Activated naive CD4-positive, alpha-beta T cell treated with anti-CD3 and anti-CD28 coated beads for 36 hours (primary cell): ENCODE measurements at regions of chr6 and their contacts with region 1.

Region 1: GRCh38 chr6:33147807-33148666 is 44.2 kb downstream of the COL11A2 start:
- DNase-seq: no peak
- H3K4me3 Mint-ChIP-seq: no peak overlapping the region
- H3K27ac Mint-ChIP-seq: no peak overlapping the region
- H3K4me1 Mint-ChIP-seq: no peaks in the 10 kb centered on the region
- H3K27me3 Mint-ChIP-seq: peaks cover 9% of the 10 kb centered on the region

Region 2: DNA sequence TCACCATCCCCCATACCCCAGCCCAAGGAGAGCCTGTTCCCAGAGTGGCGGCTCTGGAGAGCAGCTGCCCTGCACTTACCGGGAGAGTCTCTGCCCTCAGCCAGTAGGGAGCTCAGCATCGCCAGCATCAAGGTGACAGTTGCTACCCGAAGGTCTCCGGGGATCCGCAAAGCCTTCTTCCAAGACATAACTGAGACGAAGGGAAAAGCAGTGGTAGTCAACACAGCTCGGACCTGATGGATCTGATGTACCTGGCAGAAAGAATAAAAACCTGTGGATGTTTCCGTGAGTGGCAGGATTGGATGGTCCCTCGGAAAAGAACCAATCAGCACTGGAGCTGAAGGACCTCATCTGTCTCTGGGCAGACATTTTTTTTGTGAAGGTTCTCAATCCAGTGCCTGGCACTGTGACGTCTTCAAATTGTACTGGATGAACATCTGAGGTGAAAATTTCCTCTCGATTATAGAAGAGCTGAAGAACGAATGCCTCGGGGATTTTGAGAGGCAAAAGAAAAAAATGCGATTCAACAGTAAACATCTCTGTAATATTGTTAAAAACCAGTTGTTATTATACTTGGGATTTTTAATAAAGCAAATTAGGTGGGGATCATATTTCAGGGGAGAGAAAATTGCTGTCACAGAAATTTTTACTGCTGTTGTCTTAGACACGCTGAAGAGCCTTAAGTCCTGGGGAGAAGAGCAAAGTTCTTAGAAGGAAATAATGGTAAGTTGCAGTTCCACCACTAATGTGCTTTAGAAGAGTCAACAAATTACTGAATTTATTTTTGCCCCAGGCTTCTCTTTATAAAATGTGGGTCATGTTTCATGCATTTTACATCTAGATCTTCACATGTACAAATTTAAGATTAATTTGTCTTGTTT is 481.4 kb before region 1 on chr6 and contains the start of gene HLA-DQB1:
- CTCF ChIA-PET with region 1: no interaction called
- intact Hi-C with region 1: no loop called
- DNase-seq: peak; percentile 80
- H3K4me3 Mint-ChIP-seq: peak within 1 kb of the TSS; percentile 70
- H3K27ac Mint-ChIP-seq: no peak within 1 kb of the TSS
- H3K4me1 Mint-ChIP-seq: peaks cover 40% of the 10 kb centered on the region
- H3K27me3 Mint-ChIP-seq: peaks cover 32% of the 10 kb centered on the region
- total RNA-seq, gene HLA-DQB1: 6.2 to 7.4 TPM

Region 3: DNA sequence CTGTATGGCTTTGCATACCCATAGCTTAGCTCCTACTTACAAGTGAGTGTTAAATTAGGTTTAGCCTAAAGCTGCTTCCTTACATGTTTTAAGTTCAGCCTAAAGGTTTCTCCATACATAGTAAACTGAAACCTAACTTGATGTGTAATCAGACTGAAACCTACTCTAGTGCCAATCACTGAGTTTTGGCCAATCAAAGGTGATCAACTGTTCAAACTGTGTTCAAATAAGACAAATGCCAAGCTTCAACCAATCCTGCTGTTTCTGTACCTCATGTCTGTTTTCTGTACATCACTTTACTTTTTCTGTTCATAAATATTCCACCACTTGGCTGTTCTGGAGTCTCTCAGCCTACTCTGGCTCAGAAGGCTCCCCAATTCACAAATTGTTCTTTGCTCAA is 158.6 kb before region 1 on chr6:
- CTCF ChIA-PET with region 1: no interaction called
- intact Hi-C with region 1: no loop called
- DNase-seq: no peak
- H3K4me3 Mint-ChIP-seq: no peak overlapping the region
- H3K27ac Mint-ChIP-seq: no peak overlapping the region
- H3K4me1 Mint-ChIP-seq: peaks cover 5% of the 10 kb centered on the region
- H3K27me3 Mint-ChIP-seq: peaks cover 2% of the 10 kb centered on the region

Region 4: GRCh38 chr6:33014841-33015634 is 133.0 kb before region 1 on chr6:
- CTCF ChIA-PET with region 1: interaction called, 7 read pairs
- intact Hi-C with region 1: loop called (anchors 5 kb)
- DNase-seq: peak; percentile 64
- H3K4me3 Mint-ChIP-seq: no peak overlapping the region
- H3K27ac Mint-ChIP-seq: no peak overlapping the region
- H3K4me1 Mint-ChIP-seq: peaks cover 12% of the 10 kb centered on the region
- H3K27me3 Mint-ChIP-seq: no peaks in the 10 kb centered on the region

Region 5: GRCh38 chr6:33103776-33104175 is 44.3 kb before region 1 on chr6:
- CTCF ChIA-PET with region 1: no interaction called
- intact Hi-C with region 1: no loop called
- DNase-seq: no peak
- H3K4me3 Mint-ChIP-seq: no peak overlapping the region
- H3K27ac Mint-ChIP-seq: no peak overlapping the region
- H3K4me1 Mint-ChIP-seq: no peaks in the 10 kb centered on the region
- H3K27me3 Mint-ChIP-seq: peaks cover 10% of the 10 kb centered on the region

Region 6: GRCh38 chr6:33118525-33119123 is 29.4 kb before region 1 on chr6:
- CTCF ChIA-PET with region 1: interaction called, 36 read pairs
- intact Hi-C with region 1: loop called (anchors 1 kb)
- DNase-seq: no peak
- H3K4me3 Mint-ChIP-seq: no peak overlapping the region
- H3K27ac Mint-ChIP-seq: no peak overlapping the region
- H3K4me1 Mint-ChIP-seq: peaks cover 7% of the 10 kb centered on the region
- H3K27me3 Mint-ChIP-seq: peaks cover 37% of the 10 kb centered on the region

Region 7: DNA sequence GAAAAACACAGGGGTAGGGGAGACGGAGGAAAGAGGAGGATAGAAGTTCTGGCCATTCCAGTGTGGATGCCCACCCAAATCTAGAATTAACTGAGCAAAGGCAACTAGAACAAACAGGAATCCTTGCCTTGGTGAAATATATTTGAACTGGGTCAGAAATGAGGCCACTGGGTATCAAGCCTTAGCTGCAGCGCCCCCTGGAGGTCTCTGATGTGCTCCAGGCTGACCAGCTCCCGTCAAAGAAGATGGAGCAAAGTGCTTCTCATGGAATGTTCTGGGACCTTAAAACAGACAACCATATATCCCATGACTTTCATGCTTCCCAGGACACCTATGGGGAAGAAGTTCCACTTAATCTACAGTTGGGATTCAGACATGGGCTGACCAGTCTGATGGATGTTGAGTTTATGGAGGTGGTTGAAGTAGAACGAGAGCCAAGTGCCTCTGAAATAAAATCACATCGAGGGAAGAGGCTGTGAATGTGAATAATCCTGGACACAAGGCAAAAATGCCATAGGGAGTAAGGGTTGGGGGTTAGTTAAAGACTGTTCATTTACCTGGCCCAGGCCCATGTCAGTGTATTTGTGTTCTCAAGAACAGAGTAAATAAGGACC is 21.8 kb before region 1 on chr6:
- CTCF ChIA-PET with region 1: interaction called, 36 read pairs
- intact Hi-C with region 1: no loop called
- DNase-seq: peak; percentile 77
- H3K4me3 Mint-ChIP-seq: no peak overlapping the region
- H3K27ac Mint-ChIP-seq: no peak overlapping the region
- H3K4me1 Mint-ChIP-seq: no peaks in the 10 kb centered on the region
- H3K27me3 Mint-ChIP-seq: peaks cover 5% of the 10 kb centered on the region

Region 8: DNA sequence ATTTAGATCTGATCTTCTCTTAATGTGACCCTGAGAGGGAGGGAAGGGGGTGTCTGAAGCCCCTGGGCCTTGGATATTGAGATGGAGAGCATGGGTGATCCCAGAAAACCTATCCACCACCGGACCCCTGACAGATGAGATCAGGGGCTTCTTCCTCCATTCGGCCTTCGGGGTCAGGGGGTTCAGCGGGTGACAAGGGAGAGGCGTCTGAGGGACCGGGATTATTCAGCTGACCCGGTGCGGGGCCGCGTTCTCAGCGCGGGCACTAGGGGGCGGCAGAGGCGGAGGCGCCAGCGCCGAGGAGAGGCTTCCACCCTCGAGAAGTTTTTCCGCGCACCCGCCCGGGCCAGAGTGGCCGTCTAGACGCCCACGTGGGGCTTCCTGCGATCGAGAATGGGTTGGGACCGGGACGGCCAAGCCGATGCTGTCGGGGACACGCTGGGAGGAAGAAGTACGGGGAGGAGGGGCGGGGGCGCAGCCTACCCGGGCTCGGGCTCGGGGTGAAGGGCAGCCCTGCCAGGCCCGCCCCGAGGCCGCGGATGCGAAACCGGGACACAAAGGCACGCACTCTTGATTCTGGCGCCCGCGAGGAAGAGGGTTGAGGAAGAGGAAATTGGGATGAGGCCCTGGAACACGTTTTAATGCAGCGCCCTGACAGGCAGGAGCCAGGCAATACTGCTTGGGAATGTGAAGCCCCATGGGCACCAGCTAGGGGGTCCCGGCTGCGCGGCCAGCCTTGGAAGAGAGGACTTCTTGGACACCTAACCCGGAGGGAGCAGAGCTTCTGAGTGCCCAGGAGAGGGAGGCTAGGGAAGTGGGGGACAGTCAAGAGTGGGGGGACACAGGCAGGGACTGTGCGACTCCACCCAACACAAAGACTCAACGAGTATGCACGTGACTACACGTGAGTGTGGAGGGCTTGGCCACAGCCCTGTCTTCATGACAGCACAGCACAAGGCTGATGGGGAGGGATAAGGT is 13.6 kb after region 1 on chr6:
- CTCF ChIA-PET with region 1: interaction called, 10 read pairs
- intact Hi-C with region 1: no loop called
- DNase-seq: peak; percentile 85
- H3K4me3 Mint-ChIP-seq: peak overlapping the region; percentile 78
- H3K27ac Mint-ChIP-seq: no peak overlapping the region
- H3K4me1 Mint-ChIP-seq: peaks cover 12% of the 10 kb centered on the region
- H3K27me3 Mint-ChIP-seq: no peaks in the 10 kb centered on the region